Activated T-helper 1 cell treated with anti-CD3 and anti-CD28 coated beads, Interleukin-12 subunit alpha, Interleukin-12 subunit beta, Interleukin-2, Interleukin-4 antibody, amounts not matched to agents 30 ng/mL and 10 ng/mL and 1 ng/mL, durations not matched to agents 14 hours and 24 hours and 36 hours (primary cell): ENCODE measurements at regions of chr15 and their contacts with region 1.

Region 1: GRCh38 chr15:58770857-58771620 is at the start of gene MINDY2:
- DNase-seq: peak; percentile 94
- H3K4me3 Mint-ChIP-seq: no peak within 1 kb of the TSS
- H3K27ac Mint-ChIP-seq: peak within 1 kb of the TSS; percentile 88
- H3K4me1 Mint-ChIP-seq: peaks cover 9% of the 10 kb centered on the region
- H3K27me3 Mint-ChIP-seq: no peaks in the 10 kb centered on the region
- total RNA-seq, gene MINDY2: 9.0 and 9.7 TPM in 2 replicates

Region 2: GRCh38 chr15:58438956-58439355 is 332.1 kb before region 1 on chr15:
- intact Hi-C with region 1: loop called (anchors 5 kb)
- DNase-seq: peak; percentile 28
- H3K4me3 Mint-ChIP-seq: no peak overlapping the region
- H3K27ac Mint-ChIP-seq: no peak overlapping the region
- H3K4me1 Mint-ChIP-seq: peaks cover 39% of the 10 kb centered on the region
- H3K27me3 Mint-ChIP-seq: no peaks in the 10 kb centered on the region

Region 3: DNA sequence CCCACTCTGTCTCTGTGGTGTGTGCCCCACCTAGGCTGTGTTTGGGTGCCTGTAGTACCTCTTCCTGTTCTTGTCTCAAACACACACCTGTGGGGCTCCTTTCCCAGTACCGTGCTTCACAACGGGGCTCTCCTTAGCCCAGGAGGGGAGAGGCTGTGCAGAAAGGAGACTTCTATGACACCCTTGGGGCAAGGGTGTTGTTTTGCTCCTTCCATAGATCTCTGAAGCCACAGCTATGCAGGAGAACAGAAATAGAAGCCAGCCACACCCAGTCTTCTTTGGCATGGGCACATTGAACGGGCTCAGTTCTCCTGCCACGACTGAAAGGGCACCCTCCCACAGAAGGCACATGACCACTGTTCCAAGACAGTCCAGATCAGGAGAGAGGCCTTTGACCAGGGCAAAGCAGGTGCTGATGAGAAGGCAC is 265.0 kb before region 1 on chr15:
- intact Hi-C with region 1: no loop called
- DNase-seq: no peak
- H3K4me3 Mint-ChIP-seq: peak overlapping the region; percentile 21
- H3K27ac Mint-ChIP-seq: peak overlapping the region; percentile 36
- H3K4me1 Mint-ChIP-seq: peaks cover 40% of the 10 kb centered on the region
- H3K27me3 Mint-ChIP-seq: peaks cover 5% of the 10 kb centered on the region

Region 4: DNA sequence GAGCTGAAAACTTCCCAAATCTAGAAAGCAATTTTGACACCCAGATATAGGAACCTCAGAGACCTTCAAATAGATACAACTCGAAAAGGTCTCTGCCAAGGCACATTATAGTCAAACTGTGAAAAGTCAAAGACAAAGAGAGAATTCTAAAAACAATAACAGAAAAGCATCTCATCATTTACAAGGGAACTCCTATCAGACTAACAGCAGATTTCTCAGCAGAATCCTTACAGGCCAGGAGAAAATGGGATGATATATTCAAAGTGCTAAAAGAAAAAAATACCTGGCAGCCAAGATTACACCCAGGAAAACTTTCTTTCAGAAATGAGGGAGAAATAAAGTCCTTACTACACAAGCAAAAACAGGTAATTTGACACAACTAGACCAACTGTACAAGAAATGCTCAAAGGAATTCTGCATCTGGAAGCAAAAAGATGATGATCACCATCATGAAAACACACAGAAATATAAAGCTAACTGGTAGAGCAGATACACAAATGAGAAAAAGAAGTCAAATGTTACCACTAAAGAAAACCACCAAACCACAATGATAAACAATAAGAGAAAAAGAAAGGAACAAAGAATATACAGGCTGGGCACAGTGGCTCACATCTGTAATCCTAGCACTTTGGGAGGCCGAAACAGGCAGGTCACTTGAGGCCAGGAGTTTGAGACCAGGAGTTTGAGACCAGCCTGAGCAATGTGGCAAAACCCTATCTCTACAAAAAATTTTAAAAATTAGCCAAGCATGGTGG is 72.0 kb before region 1 on chr15:
- intact Hi-C with region 1: loop called (anchors 2 kb)
- DNase-seq: no peak
- H3K4me3 Mint-ChIP-seq: peak overlapping the region; percentile 8
- H3K27ac Mint-ChIP-seq: peak overlapping the region; percentile 85
- H3K4me1 Mint-ChIP-seq: peaks cover 57% of the 10 kb centered on the region
- H3K27me3 Mint-ChIP-seq: no peaks in the 10 kb centered on the region

Region 5: DNA sequence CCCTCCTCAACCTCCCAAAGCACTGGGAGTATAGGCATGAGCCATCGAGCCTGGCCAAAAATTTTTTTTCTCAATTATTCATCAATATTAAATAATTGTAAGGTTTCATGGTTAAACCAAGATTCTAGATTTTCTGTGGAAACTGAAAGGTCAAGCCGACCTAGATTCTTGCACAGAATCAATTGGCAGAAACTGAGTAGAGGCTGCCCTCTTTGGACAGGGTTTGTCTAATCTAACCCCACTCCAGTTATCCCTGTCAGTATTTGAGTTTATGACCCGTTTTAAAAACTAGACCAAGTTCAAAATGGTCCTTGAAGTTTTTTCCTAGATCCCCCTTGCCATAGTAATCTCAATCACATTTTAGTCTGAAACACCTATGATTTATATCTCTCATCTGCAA is 12.9 kb before region 1 on chr15:
- intact Hi-C with region 1: no loop called
- DNase-seq: no peak
- H3K4me3 Mint-ChIP-seq: no peak overlapping the region
- H3K27ac Mint-ChIP-seq: no peak overlapping the region
- H3K4me1 Mint-ChIP-seq: peaks cover 5% of the 10 kb centered on the region
- H3K27me3 Mint-ChIP-seq: peaks cover 6% of the 10 kb centered on the region

Region 6: GRCh38 chr15:58793862-58794261 is 22.8 kb after region 1 on chr15:
- intact Hi-C with region 1: no loop called
- DNase-seq: no peak
- H3K4me3 Mint-ChIP-seq: no peak overlapping the region
- H3K27ac Mint-ChIP-seq: no peak overlapping the region
- H3K4me1 Mint-ChIP-seq: peaks cover 17% of the 10 kb centered on the region
- H3K27me3 Mint-ChIP-seq: no peaks in the 10 kb centered on the region

Region 7: DNA sequence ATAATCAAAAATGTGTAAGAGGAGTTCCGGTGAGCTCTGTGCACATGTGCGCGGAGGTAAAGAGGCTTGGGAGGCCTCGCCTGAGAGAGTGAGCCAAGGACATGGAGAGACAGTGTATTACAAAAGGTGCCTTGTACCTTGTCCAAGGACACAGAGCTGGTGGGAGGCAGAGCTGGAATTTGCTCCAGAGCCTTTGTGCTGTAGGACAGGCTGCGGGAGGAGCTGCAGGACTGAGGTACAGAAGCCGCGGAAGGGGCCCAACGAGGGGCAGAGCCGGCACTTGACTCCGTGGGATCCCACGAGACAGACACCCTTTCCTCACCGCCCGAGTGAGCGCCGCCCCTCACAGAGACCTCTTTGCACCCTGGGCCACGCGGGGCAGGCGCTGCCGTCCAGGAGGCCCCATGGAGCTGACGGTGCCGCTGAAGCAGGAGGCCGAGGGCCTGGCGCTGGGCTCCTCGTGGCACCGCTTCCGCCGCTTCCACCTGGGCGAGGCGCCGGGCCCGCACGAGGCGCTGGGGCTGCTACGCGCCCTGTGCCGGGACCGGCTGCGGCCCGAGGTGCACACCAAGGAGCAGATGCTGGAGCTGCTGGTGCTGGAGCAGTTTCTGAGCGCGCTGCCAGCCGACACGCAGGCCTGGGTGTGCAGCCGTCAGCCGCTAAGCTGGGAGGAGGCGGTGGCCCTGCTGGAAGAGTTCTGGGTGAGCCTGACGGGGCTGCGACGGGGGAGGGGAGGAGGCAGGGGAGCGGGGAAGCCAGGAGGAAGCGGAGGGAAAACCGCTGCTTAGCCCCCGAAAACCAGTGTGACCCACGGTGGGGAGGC is 93.8 kb after region 1 on chr15:
- intact Hi-C with region 1: loop called (anchors 5 kb)
- DNase-seq: no peak
- H3K4me3 Mint-ChIP-seq: no peak overlapping the region
- H3K27ac Mint-ChIP-seq: no peak overlapping the region
- H3K4me1 Mint-ChIP-seq: peaks cover 14% of the 10 kb centered on the region
- H3K27me3 Mint-ChIP-seq: peaks cover 3% of the 10 kb centered on the region

Region 8: DNA sequence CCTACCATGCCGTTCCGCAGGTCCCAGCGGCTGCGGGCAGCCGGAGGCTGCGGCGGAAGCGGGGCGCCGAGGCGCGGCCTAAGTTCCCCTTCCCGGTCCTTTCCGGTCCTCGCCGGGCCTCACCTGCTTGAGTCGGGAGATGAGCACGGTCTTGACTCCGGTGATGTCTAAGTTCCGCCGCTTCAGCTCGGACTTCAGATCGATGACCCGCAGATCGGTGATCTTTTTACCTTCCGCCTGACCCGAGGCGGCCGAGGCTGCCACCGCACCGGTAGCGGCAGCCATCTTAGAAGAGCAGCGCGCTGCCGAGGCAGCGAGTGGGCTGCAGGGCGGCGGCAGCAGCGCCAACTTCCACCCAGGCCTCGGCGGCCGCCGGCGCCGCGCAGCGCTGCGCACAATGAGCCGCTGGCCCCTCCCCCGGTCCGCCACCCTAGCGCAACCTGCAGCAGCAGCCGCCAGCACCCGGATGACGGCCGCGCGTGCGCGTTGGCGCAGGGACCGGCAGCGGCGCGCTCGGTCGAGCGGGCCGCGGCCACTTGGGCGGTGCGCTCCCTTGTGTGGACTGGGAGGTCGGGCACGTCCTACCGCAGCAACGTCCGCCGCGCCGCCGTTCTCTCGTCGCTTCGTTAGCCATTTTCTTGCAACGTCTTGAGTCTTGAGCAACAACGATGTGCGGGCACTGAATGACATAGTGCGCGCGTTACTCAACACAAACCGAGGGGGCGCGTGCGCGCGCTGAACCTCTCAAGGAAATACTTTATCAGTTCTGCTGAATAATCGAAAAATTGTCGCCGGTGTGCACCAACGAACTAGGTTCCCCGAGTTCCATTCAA is 162.5 kb after region 1 on chr15 and contains the start of gene SLTM:
- intact Hi-C with region 1: loop called (anchors 1 kb)
- DNase-seq: peak; percentile 88
- H3K4me3 Mint-ChIP-seq: peak within 1 kb of the TSS; percentile 98
- H3K27ac Mint-ChIP-seq: peak within 1 kb of the TSS; percentile 100
- H3K4me1 Mint-ChIP-seq: peaks cover 34% of the 10 kb centered on the region
- H3K27me3 Mint-ChIP-seq: no peaks in the 10 kb centered on the region
- total RNA-seq, gene SLTM: 142 and 143 TPM in 2 replicates

Region 9: GRCh38 chr15:59304034-59304795 is 533.2 kb after region 1 on chr15:
- intact Hi-C with region 1: no loop called
- DNase-seq: no peak
- H3K4me3 Mint-ChIP-seq: no peak overlapping the region
- H3K27ac Mint-ChIP-seq: no peak overlapping the region
- H3K4me1 Mint-ChIP-seq: peaks cover 45% of the 10 kb centered on the region
- H3K27me3 Mint-ChIP-seq: no peaks in the 10 kb centered on the region